SK-N-SH (cell line): ENCODE measurements at regions of chr3 and their contacts with region 1.

Region 1: DNA sequence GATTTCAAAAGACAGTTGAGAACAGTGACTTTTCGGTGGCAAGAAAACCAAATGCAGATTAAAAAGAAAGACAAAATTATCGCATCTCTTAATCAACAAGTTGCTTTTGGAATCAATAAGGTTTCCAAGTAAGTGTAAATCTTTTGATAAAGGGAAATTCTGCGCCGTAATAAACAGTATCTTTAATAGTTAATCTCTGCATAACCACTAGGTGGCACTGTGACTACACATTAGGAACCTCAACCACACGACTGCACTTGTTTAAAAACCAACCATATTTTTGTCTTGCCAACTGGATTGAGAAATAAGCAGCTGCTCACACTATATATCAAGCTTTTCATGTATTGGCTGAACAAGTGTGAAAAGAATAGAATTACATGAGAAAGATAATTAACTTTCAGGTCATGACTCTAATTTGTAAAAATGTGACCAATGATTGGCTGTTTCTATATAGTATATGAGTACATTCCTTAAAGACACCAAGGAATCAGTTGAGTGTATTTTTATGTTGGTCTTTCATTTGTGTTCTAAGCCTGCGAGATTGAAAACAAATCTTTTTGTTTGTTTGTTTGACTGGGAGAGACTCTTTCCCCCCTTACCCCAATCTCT is 72.7 kb downstream of the DZIP3 start:
- DNase-seq: peak; percentile 53
- H3K4me3 ChIP-seq: no peak overlapping the region; a peak in 1 of 4 replicates
- H3K27ac ChIP-seq: no peak overlapping the region
- H3K4me1 ChIP-seq: no peaks in the 10 kb centered on the region
- H3K27me3 ChIP-seq: no peaks in the 10 kb centered on the region
- CTCF ChIP-seq: peak; percentile 87
- EP300 ChIP-seq: no peak
- RAD21 ChIP-seq: peak; percentile 92

Region 2: DNA sequence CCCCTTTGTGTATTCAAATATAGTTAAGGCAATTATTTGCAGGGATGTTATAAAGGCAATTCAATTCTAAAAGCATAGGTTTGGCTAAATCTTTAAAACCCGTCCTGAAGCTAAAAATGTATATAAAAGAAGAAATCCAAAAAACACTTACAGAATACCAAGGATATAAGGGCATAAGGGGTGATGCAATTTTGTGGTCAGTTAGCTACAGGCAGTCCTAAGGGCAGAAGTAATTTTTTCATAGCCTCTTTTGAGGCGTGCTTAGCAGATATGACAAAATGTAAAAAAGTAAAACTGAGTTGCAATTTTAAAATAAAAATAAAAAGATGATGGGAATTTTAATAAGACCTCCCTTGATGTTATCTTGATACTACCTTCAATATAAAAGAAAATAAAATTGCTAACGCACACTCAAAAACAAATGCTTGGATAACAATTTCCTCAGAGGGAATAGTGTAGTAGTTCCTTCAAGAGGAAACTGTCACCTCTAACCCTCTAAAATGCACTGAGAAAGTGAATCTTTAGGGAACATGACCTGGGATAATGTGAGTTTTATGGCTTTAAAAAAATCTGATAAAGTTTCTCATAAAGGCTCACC is 256.1 kb before region 1 on chr3:
- CTCF ChIA-PET with region 1: no interaction called
- POLR2A ChIA-PET with region 1: no interaction called
- DNase-seq: no peak
- H3K4me3 ChIP-seq: no peak overlapping the region
- H3K27ac ChIP-seq: no peak overlapping the region
- H3K4me1 ChIP-seq: peaks cover 15 to 18% of the 10 kb centered on the region in 2 experiments
- H3K27me3 ChIP-seq: no peaks in the 10 kb centered on the region
- CTCF ChIP-seq: no peak
- EP300 ChIP-seq: no peak
- RAD21 ChIP-seq: no peak

Region 3: DNA sequence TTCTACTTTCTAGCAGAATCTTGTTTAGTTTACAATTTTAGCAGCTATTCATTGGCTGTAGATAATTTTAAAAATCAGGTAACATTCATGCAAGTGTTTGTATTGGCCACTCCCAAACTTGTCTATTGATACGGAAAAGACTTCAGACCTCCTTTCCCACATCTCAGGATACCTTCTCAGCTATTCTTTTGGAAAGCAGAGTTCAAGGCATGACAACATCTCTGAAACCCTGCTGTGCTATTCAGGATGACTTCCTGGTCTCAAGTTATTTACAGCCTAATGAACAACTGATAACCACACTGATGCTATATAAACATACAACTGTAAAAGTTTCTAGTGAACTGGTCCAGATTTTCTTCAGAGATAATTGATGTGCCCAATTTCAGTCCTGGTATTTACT is 16.9 kb before region 1 on chr3:
- CTCF ChIA-PET with region 1: interaction called, 10 read pairs
- POLR2A ChIA-PET with region 1: no interaction called
- DNase-seq: no peak
- H3K4me3 ChIP-seq: no peak overlapping the region
- H3K27ac ChIP-seq: no peak overlapping the region
- H3K4me1 ChIP-seq: no peaks in the 10 kb centered on the region; a peak in 1 of 4 replicates
- H3K27me3 ChIP-seq: no peaks in the 10 kb centered on the region
- CTCF ChIP-seq: no peak
- EP300 ChIP-seq: no peak
- RAD21 ChIP-seq: no peak

Region 4: GRCh38 chr3:108673988-108674661 is 11.9 kb after region 1 on chr3:
- CTCF ChIA-PET with region 1: interaction called, 21 read pairs
- POLR2A ChIA-PET with region 1: no interaction called
- DNase-seq: no peak
- H3K4me3 ChIP-seq: no peak overlapping the region
- H3K27ac ChIP-seq: no peak overlapping the region
- H3K4me1 ChIP-seq: no peaks in the 10 kb centered on the region; a peak in 1 of 4 replicates
- H3K27me3 ChIP-seq: no peaks in the 10 kb centered on the region
- CTCF ChIP-seq: no peak
- EP300 ChIP-seq: no peak
- RAD21 ChIP-seq: no peak

Region 5: DNA sequence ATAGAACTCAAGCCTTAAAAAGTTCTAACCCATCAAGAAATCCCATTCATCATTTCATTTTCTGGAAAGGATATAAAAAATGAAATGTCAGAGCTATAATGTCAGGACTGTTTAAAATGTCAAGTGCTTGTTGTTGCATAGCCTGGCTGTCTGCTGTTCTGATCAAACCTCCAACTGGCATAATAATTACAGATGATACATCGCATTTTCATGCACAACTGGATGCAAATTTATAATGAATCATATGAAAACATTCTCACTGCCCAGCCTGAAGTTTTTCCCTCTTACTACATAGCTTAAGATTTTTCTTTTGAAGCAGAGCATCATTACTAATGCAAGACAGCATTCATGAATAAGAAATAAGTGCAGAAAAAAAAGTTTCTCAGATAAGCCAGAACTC is 245.0 kb after region 1 on chr3:
- CTCF ChIA-PET with region 1: interaction called, 199 read pairs
- POLR2A ChIA-PET with region 1: no interaction called
- DNase-seq: no peak
- H3K4me3 ChIP-seq: no peak overlapping the region
- H3K27ac ChIP-seq: no peak overlapping the region
- H3K4me1 ChIP-seq: no peaks in the 10 kb centered on the region; a peak in 1 of 4 replicates
- H3K27me3 ChIP-seq: no peaks in the 10 kb centered on the region
- CTCF ChIP-seq: no peak
- EP300 ChIP-seq: no peak
- RAD21 ChIP-seq: no peak